Sigmoid colon (tissue), 7 donors: ENCODE measurements at regions of chr1 and their contacts with region 1.

Region 1: DNA sequence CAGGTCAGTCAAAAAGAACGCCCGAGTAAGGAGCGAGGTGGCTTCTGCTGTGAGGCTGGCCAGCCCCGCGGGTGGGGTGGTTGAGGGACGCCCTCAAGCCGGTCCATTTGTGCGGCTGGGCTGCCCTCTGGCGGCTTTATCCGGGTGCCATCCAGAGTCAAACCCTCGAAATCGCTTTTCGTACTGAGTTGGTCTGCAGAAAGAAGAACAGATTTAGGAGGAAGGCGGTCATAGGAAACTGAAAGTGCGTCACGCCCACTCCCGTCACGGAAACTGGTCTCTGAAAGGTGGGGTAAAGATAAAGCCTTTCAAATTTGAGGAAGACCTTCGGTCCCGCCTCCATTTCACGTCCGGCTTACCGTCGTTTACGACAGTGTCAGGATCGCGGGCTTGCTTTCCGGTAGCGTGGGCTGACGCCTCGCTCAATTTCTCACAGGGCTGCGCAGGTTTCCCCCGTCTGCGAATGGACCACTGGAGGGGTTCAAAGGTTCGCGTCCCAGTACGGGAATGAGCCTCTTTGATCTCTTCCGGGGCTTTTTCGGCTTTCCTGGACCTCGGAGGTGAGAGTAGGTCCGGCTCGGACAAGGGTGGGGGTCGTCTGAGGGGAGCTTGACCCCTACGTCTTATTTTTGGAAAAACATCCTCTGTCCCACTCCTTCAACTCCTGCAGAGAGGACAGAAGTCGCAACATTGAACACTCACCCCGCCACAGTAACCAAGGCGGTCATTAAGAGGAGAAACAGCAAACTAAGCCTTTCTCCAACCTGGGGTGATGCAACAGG is at the start of gene HAX1:
- DNase-seq: peak; percentile 97
- H3K4me3 ChIP-seq: peak within 1 kb of the TSS; percentile 48 to 78 (median 66)
- H3K27ac ChIP-seq: peak within 1 kb of the TSS; percentile 80 to 90 (median 85)
- H3K4me1 ChIP-seq: peaks cover 0 to 18% (median 14%) of the 10 kb centered on the region in 4 donors
- H3K27me3 ChIP-seq: no peaks in the 10 kb centered on the region
- CTCF ChIP-seq: peak; percentile 58 to 79 (median 69)
- EP300 ChIP-seq: peak in 1 of 4 donors; percentile 72
- POLR2A ChIP-seq: peak; percentile 40 to 54
- total RNA-seq, gene HAX1: 105 to 171 (median 120) TPM

Region 2: DNA sequence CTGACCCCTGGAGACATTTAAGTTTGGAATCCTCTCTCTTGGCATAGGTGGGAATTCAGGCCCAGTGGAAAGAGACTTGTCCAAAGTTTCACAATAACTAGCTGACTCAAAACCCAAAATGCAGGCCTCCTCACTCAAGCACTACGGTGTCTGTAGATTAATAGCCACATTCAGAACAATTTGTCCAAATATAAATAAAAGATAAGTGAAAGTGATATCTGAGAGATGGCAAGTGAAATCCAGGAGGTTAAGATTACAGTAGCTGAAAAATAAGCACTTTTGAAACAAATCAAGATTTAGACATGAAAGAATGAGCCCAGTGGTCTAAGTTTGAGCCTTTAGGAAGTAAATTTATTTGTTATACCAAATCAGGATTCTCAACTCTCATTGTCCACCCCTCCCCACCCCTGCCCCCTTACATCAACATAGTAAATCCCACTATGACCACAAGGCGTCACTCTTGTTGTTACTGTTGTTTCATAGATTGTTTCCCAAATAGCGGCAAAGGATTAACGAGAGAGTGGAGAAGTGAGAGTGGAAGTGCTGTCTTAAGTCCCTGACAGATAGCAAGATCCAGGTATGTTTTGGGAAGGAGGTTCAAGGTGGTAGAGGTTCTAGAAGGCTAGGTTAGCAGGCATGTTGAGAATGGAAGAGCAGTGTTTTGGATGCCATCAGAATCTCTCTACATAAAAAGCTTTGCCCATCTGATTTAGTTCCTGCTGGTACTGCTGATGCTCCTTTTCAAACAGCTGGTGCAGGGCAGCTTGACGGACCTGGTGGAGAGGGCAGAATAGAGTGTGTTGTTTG is 73.4 kb before region 1 on chr1:
- intact Hi-C with region 1: loop called (anchors 5 kb)
- DNase-seq: no peak
- H3K4me3 ChIP-seq: no peak overlapping the region
- H3K27ac ChIP-seq: peak overlapping the region in 1 of 4 donors; percentile 5
- H3K4me1 ChIP-seq: peaks cover 0 to 5% (median 0%) of the 10 kb centered on the region in 4 donors
- H3K27me3 ChIP-seq: no peaks in the 10 kb centered on the region
- CTCF ChIP-seq: peak; percentile 17 to 59 (median 32)
- EP300 ChIP-seq: no peak
- POLR2A ChIP-seq: no peak

Region 3: GRCh38 chr1:154324669-154325582 is 52.5 kb after region 1 on chr1 and contains the start of gene ATP8B2:
- intact Hi-C with region 1: loop called (anchors 5 kb)
- DNase-seq: peak; percentile 88
- H3K4me3 ChIP-seq: peak within 1 kb of the TSS; percentile 69 to 85 (median 76)
- H3K27ac ChIP-seq: peak within 1 kb of the TSS; percentile 93 to 98 (median 96)
- H3K4me1 ChIP-seq: peaks cover 0 to 50% (median 41%) of the 10 kb centered on the region in 4 donors
- H3K27me3 ChIP-seq: no peaks in the 10 kb centered on the region
- CTCF ChIP-seq: peak; percentile 86 to 92 (median 92)
- EP300 ChIP-seq: no peak
- POLR2A ChIP-seq: no peak
- total RNA-seq, gene ATP8B2: 53.1 to 64.3 (median 56.6) TPM

Region 4: GRCh38 chr1:154335025-154335714 is 62.8 kb after region 1 on chr1:
- intact Hi-C with region 1: loop called (anchors 5 kb)
- DNase-seq: peak; percentile 91
- H3K4me3 ChIP-seq: no peak overlapping the region
- H3K27ac ChIP-seq: peak overlapping the region; percentile 65 to 85 (median 74)
- H3K4me1 ChIP-seq: peaks cover 0 to 19% (median 15%) of the 10 kb centered on the region in 4 donors
- H3K27me3 ChIP-seq: no peaks in the 10 kb centered on the region
- CTCF ChIP-seq: peak; percentile 69 to 86 (median 84)
- EP300 ChIP-seq: no peak
- POLR2A ChIP-seq: no peak